Sigmoid colon (tissue), 7 donors: ENCODE measurements at regions of chr7 and their contacts with region 1.

Region 1: DNA sequence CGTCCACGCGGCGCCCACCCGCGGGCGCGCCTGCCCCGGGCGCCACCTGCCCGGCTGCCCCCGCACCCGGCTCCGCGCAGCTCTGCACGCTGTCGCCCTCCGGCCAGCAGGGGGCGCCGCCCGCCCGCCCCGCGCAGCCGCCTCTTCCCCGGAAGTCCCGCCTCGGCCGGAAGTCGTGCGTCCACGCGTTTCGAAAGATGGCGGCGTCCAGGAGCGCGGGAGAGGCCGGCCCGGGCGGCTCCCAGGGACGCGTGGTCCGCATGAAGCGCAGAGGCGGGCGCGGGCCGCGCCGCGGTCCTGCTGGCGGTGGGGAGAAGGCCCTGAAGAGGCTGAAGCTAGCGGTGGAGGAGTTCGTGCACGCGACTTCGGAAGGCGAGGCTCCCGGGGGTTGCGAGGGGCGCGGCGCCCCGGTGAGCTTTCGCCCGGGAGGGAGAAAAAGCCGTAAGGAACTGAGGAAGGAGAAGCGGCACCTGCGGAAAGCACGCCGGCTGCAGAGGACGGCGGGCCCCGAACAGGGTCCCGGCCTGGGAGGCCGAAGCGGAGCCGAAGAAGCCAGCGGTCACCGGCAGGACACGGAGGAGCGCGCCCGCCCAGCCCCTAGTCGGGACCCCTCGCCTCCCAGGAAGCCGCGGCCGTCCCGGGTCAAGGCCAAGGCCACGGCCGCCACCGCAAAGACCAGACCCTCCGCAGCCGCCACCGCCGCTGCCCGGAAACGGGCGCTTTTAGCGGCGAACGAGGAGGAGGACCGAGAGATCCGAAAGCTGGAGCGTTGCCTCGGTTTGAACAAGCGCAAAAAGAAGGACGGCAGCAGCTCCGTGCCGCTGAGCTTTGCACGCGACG is at the start of gene NOM1:
- DNase-seq: peak; percentile 90
- H3K4me3 ChIP-seq: peak within 1 kb of the TSS; percentile 79 to 94 (median 92)
- H3K27ac ChIP-seq: peak within 1 kb of the TSS; percentile 62 to 75 (median 69)
- H3K4me1 ChIP-seq: peaks cover 0 to 35% (median 29%) of the 10 kb centered on the region in 4 donors
- H3K27me3 ChIP-seq: peaks cover 0 to 13% (median 4%) of the 10 kb centered on the region in 3 donors
- CTCF ChIP-seq: peak in 1 of 4 experiments; percentile 68
- EP300 ChIP-seq: no peak
- POLR2A ChIP-seq: peak; percentile 11 to 24
- total RNA-seq, gene NOM1: 14.1 to 19.1 (median 17.2) TPM

Region 2: GRCh38 chr7:156892821-156893706 is 56.7 kb before region 1 on chr7 and contains the start of gene LMBR1:
- intact Hi-C with region 1: loop called (anchors 1 kb)
- DNase-seq: peak; percentile 97
- H3K4me3 ChIP-seq: peak within 1 kb of the TSS; percentile 58 to 94 (median 84)
- H3K27ac ChIP-seq: peak within 1 kb of the TSS; percentile 91 to 97 (median 92)
- H3K4me1 ChIP-seq: peaks cover 0 to 17% (median 9%) of the 10 kb centered on the region in 4 donors
- H3K27me3 ChIP-seq: no peaks in the 10 kb centered on the region
- CTCF ChIP-seq: peak; percentile 67 to 97 (median 84)
- EP300 ChIP-seq: peak in 1 of 4 donors; percentile 43
- POLR2A ChIP-seq: peak in 1 of 2 donors; percentile 38
- total RNA-seq, gene LMBR1: 43.9 to 60.9 (median 51.2) TPM

Region 3: GRCh38 chr7:157138424-157139110 is 188.8 kb after region 1 on chr7 and contains the start of gene UBE3C:
- intact Hi-C with region 1: loop called (anchors 5 kb)
- DNase-seq: peak; percentile 93
- H3K4me3 ChIP-seq: peak within 1 kb of the TSS; percentile 61 to 80 (median 72)
- H3K27ac ChIP-seq: peak within 1 kb of the TSS; percentile 88 to 94 (median 90)
- H3K4me1 ChIP-seq: peaks cover 0 to 34% (median 25%) of the 10 kb centered on the region in 4 donors
- H3K27me3 ChIP-seq: no peaks in the 10 kb centered on the region
- CTCF ChIP-seq: no peak
- EP300 ChIP-seq: no peak
- POLR2A ChIP-seq: peak in 1 of 2 donors; percentile 13
- total RNA-seq, gene UBE3C: 55.7 to 84.2 (median 70.5) TPM

Region 4: GRCh38 chr7:157273208-157274093 is 323.7 kb after region 1 on chr7:
- intact Hi-C with region 1: loop called (anchors 5 kb)
- DNase-seq: peak; percentile 85
- H3K4me3 ChIP-seq: no peak overlapping the region
- H3K27ac ChIP-seq: peak overlapping the region in 1 of 4 donors; percentile 78
- H3K4me1 ChIP-seq: peaks cover 0 to 35% (median 27%) of the 10 kb centered on the region in 4 donors
- H3K27me3 ChIP-seq: peaks cover 0 to 4% (median under 1%) of the 10 kb centered on the region in 3 donors
- CTCF ChIP-seq: peak; percentile 85 to 99 (median 90)
- EP300 ChIP-seq: no peak
- POLR2A ChIP-seq: no peak

Region 5: DNA sequence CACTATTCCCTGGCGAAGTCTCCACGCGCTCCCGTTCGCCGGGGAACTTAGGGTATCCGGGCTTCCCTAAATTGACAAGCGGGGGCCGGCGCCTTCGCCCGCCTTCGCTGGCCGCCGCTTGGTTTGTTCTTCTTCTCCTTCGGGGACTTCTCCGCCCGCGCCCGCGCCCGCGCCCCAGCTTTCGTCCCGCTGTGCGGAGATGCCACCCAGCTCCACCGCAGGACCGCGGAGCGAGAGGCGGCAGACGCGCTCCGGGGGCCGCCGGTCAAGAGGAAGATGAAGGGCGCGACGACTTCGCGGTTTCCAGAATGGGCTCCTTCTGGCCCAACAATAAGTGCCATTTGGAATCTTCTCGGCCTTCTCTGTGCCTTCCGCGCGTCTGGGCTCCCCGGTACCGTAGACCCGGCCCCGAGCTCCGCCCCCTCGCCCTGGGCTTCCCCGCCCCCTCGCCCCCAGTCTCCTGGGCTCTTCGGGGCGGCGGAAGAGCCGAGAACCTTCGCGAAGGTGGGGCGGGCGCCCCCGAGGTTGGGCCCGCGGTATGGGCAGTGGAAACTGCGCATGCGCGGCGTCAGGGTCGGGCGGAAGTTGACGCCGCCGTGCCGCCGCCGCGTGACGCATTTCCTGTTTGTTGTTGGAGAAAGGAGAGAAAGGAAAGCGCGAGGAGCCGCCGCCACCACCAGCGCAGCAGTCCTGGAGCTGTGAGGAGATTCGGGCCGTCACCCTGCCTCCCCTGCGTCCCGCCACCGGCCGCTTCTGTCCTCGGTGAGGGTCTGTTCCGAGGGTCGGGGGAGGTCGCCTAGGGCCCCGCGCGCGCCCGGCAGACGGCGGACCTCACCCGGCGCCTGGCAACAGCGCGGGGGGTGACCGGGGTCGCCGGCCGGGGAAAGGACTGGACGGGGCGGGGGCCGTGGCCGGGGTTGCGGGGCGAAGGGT is 386.9 kb after region 1 on chr7 and contains the start of gene DNAJB6:
- intact Hi-C with region 1: loop called (anchors 1 kb)
- DNase-seq: peak; percentile 96
- H3K4me3 ChIP-seq: peak within 1 kb of the TSS; percentile 68 to 93 (median 90)
- H3K27ac ChIP-seq: peak within 1 kb of the TSS; percentile 97 to 100 (median 99)
- H3K4me1 ChIP-seq: peaks cover 2 to 45% (median 39%) of the 10 kb centered on the region in 4 donors
- H3K27me3 ChIP-seq: no peaks in the 10 kb centered on the region
- CTCF ChIP-seq: no peak
- EP300 ChIP-seq: peak in 2 of 4 donors; percentile 36 to 93
- POLR2A ChIP-seq: peak; percentile 84 to 92
- total RNA-seq, gene DNAJB6: 120 to 145 (median 129) TPM

Region 6: GRCh38 chr7:157386979-157387800 is 437.4 kb after region 1 on chr7:
- intact Hi-C with region 1: loop called (anchors 5 kb)
- DNase-seq: peak; percentile 91
- H3K4me3 ChIP-seq: no peak overlapping the region
- H3K27ac ChIP-seq: peak overlapping the region in 3 of 4 donors; percentile 34 to 61 (median 55)
- H3K4me1 ChIP-seq: peaks cover 0 to 17% (median 8%) of the 10 kb centered on the region in 4 donors
- H3K27me3 ChIP-seq: no peaks in the 10 kb centered on the region
- CTCF ChIP-seq: peak; percentile 56 to 92 (median 84)
- EP300 ChIP-seq: peak in 1 of 4 donors; percentile 20
- POLR2A ChIP-seq: no peak